GM12878 (cell line): ENCODE measurements at regions of chr3 and their contacts with region 1.

Region 1: DNA sequence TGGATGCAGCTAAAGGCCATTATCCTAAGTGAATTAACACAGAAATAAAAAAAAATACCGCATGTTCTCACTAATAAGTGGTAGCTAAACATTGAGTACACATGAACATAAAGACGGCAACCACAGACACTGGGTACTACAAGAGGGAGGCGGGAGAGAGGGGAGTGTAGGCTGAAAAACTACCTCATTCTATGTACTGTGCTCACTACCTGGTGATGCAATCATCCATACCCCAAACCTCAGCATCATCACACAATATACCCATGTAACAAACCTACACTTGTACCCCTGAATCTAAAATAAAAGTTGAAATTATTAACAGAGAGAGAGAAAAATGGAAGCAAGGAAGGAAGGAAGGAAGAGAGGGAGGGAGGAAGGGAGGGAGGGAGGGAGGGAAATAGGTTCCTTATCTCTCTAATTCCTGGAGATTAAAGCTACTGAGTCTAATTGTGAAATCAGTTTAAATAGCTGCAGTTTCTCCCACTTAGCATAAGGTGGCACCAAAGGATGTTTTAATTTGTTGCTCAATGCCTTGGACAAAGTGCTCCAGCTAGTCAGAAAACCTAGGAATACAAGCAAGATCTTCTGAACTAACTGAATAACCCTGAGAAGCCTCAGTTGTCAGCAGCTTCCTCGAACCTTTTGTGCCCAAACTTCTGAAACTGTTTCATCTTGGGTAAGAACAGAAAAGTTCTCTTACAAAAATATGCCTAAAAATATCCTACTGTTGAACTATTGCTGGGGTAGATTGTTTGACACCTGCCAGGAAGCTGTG is 79.4 kb upstream of the ATP11B start:
- DNase-seq: peak; percentile 49
- ATAC-seq: peak; percentile 48
- H3K4me3 ChIP-seq: no peak overlapping the region
- H3K27ac ChIP-seq: no peak overlapping the region; the same call in 1 of the 2 replicates
- H3K4me1 ChIP-seq: peaks cover 35% of the 10 kb centered on the region
- H3K27me3 ChIP-seq: no peaks in the 10 kb centered on the region
- CTCF ChIP-seq: peak; percentile 51 to 81 (median 64); a peak in 5 of 6 replicates
- EP300 ChIP-seq: no peak
- POLR2A ChIP-seq: no peak
- RAD21 ChIP-seq: peak; percentile 89

Region 2: DNA sequence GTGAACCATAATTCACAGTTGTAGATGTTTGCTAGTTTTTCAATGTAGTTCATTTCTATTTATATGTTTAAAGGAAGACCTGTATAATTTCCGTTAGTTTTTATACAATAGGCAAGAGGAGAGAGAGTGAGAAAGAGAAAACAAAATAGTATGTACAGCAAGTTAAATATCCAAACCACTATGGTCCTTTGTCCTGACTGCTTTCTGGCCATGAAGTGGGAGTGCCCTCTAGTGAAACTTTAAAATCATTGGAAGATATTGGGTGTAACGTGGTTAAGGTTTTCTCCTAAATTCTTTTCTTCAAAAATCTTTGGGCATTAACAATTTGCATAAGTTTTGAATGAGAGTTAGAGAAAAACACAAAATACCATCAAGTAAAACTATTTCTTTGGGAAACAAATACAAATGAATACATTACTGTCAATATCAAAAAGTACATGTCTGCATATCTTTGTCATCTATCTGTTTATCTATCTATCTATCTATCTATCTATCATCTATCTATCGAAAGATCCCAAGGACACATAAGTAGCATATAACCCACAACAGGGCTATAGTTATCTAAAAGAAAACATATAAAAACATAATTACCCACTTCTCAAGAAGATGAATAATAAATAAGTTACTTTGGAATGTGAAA is 455.3 kb before region 1 on chr3:
- CTCF ChIA-PET with region 1: no interaction called
- POLR2A ChIA-PET with region 1: no interaction called
- RAD21 ChIA-PET with region 1: no interaction called
- SMC1A ChIA-PET with region 1: no interaction called
- in situ Hi-C with region 1: no loop called
- intact Hi-C with region 1: no loop called
- DNase-seq: no peak
- ATAC-seq: peak; percentile 55; the same call in 2 of the 3 replicates
- H3K4me3 ChIP-seq: no peak overlapping the region
- H3K27ac ChIP-seq: no peak overlapping the region
- H3K4me1 ChIP-seq: no peaks in the 10 kb centered on the region
- H3K27me3 ChIP-seq: no peaks in the 10 kb centered on the region; a peak in 1 of 4 replicates
- CTCF ChIP-seq: peak; percentile 36 to 57 (median 38); a peak in 4 of 6 replicates
- EP300 ChIP-seq: no peak
- POLR2A ChIP-seq: no peak
- RAD21 ChIP-seq: peak; percentile 96

Region 3: DNA sequence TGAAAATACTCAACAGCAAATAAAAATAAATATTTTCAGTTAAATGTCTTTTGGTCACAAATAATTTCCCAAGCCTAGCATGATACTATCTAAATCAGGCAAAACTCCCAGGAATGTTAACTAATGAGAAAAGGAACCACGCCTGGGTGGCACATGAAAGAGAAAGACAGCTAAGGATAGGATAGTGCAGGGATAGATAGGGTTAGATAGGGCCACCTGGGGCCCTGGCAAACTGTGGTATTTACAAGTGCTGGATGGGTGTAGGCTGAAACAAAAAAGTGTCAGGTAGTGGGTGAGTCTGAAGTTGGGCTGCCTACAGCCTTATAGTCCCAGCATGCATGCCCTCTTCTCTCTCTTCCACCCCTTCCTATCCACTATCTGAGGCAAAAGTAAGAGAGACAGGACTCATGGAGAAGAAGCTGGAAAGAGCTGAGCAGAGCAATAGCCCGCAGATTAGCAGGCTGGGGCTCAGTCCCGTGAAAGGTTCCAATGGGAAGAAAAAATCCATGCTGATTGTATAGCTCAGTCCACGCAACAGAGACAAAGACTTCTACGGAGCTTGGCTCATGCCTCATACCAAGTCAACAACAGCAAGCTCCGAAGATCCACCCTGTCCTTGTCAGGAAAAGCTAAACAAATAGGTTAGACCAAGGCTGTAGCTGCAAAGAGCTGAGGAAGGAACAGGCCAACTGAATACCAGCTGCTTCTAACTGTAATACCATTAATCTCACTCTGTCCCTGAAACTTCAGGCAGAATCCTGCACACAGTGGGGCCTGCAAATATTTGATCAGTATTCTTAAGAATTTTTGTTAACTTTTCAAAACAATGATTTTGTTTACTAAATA is 262.8 kb before region 1 on chr3:
- CTCF ChIA-PET with region 1: no interaction called
- POLR2A ChIA-PET with region 1: no interaction called
- RAD21 ChIA-PET with region 1: no interaction called
- SMC1A ChIA-PET with region 1: no interaction called
- in situ Hi-C with region 1: no loop called
- intact Hi-C with region 1: no loop called
- DNase-seq: no peak
- ATAC-seq: no peak
- H3K4me3 ChIP-seq: no peak overlapping the region
- H3K27ac ChIP-seq: no peak overlapping the region
- H3K4me1 ChIP-seq: no peaks in the 10 kb centered on the region
- H3K27me3 ChIP-seq: no peaks in the 10 kb centered on the region; a peak in 2 of 4 replicates
- CTCF ChIP-seq: no peak
- EP300 ChIP-seq: no peak
- POLR2A ChIP-seq: no peak
- RAD21 ChIP-seq: no peak

Region 4: GRCh38 chr3:182575941-182576340 is 138.0 kb before region 1 on chr3:
- CTCF ChIA-PET with region 1: no interaction called
- POLR2A ChIA-PET with region 1: no interaction called
- RAD21 ChIA-PET with region 1: no interaction called
- SMC1A ChIA-PET with region 1: no interaction called
- in situ Hi-C with region 1: no loop called
- intact Hi-C with region 1: no loop called
- DNase-seq: no peak
- ATAC-seq: no peak
- H3K4me3 ChIP-seq: no peak overlapping the region
- H3K27ac ChIP-seq: no peak overlapping the region
- H3K4me1 ChIP-seq: no peaks in the 10 kb centered on the region
- H3K27me3 ChIP-seq: no peaks in the 10 kb centered on the region
- CTCF ChIP-seq: no peak
- EP300 ChIP-seq: no peak
- POLR2A ChIP-seq: no peak
- RAD21 ChIP-seq: no peak

Region 5: DNA sequence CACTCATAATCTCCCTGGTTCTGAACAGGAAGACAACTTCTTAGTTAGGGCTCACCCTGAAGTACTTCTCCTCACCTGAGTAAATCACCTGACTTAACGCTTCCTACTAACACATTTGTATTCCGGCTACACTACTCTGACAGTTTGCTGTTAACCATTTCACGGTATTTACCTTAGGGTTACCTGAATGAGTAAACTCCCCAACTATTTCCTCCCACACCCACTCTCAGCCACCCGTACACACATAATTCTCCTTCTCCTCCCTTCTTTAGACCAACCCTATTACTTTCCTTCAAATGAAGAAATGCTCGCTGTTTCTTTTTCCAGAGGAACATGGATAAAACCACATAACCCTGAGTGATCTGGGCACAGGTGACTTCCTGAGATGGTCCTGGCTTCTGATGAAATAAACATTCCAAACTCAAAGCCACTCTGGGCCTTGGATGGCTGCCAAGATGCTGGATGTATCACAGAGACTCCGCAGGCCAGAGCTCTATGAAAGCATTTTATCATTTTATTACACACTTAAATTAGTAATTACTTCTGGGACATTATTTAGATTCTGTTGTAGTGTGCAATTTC is 104.3 kb before region 1 on chr3:
- CTCF ChIA-PET with region 1: no interaction called
- POLR2A ChIA-PET with region 1: no interaction called
- RAD21 ChIA-PET with region 1: no interaction called
- SMC1A ChIA-PET with region 1: no interaction called
- in situ Hi-C with region 1: no loop called
- intact Hi-C with region 1: no loop called
- DNase-seq: no peak
- ATAC-seq: no peak
- H3K4me3 ChIP-seq: no peak overlapping the region
- H3K27ac ChIP-seq: no peak overlapping the region
- H3K4me1 ChIP-seq: no peaks in the 10 kb centered on the region
- H3K27me3 ChIP-seq: no peaks in the 10 kb centered on the region
- CTCF ChIP-seq: no peak
- EP300 ChIP-seq: no peak
- POLR2A ChIP-seq: no peak
- RAD21 ChIP-seq: no peak

Region 6: GRCh38 chr3:182746959-182747358 is 33.0 kb after region 1 on chr3:
- CTCF ChIA-PET with region 1: interaction called, 4 read pairs
- POLR2A ChIA-PET with region 1: no interaction called
- RAD21 ChIA-PET with region 1: interaction called, 4 read pairs
- SMC1A ChIA-PET with region 1: interaction called, 12 read pairs
- in situ Hi-C with region 1: no loop called
- intact Hi-C with region 1: no loop called
- DNase-seq: no peak
- ATAC-seq: no peak
- H3K4me3 ChIP-seq: no peak overlapping the region
- H3K27ac ChIP-seq: no peak overlapping the region
- H3K4me1 ChIP-seq: no peaks in the 10 kb centered on the region
- H3K27me3 ChIP-seq: no peaks in the 10 kb centered on the region
- CTCF ChIP-seq: no peak
- EP300 ChIP-seq: no peak
- POLR2A ChIP-seq: no peak
- RAD21 ChIP-seq: no peak

Region 7: GRCh38 chr3:182829761-182830405 is 116.0 kb after region 1 on chr3:
- CTCF ChIA-PET with region 1: interaction called, 195 read pairs
- POLR2A ChIA-PET with region 1: interaction called, 3 read pairs
- RAD21 ChIA-PET with region 1: interaction called, 136 read pairs
- SMC1A ChIA-PET with region 1: interaction called, 106 read pairs
- in situ Hi-C with region 1: loop called (anchors 5 kb)
- intact Hi-C with region 1: no loop called
- DNase-seq: no peak
- ATAC-seq: no peak
- H3K4me3 ChIP-seq: no peak overlapping the region
- H3K27ac ChIP-seq: no peak overlapping the region
- H3K4me1 ChIP-seq: peaks cover 2% of the 10 kb centered on the region; the same call in 1 of the 2 replicates
- H3K27me3 ChIP-seq: no peaks in the 10 kb centered on the region
- CTCF ChIP-seq: no peak
- EP300 ChIP-seq: no peak
- POLR2A ChIP-seq: no peak
- RAD21 ChIP-seq: no peak

Region 8: GRCh38 chr3:182861348-182861747 is 147.4 kb after region 1 on chr3:
- CTCF ChIA-PET with region 1: interaction called, 93 read pairs
- POLR2A ChIA-PET with region 1: no interaction called
- RAD21 ChIA-PET with region 1: interaction called, 10 read pairs
- SMC1A ChIA-PET with region 1: interaction called, 24 read pairs
- in situ Hi-C with region 1: no loop called
- intact Hi-C with region 1: no loop called
- DNase-seq: no peak
- ATAC-seq: no peak
- H3K4me3 ChIP-seq: no peak overlapping the region
- H3K27ac ChIP-seq: no peak overlapping the region
- H3K4me1 ChIP-seq: no peaks in the 10 kb centered on the region
- H3K27me3 ChIP-seq: no peaks in the 10 kb centered on the region
- CTCF ChIP-seq: no peak
- EP300 ChIP-seq: no peak
- POLR2A ChIP-seq: no peak
- RAD21 ChIP-seq: no peak

Region 9: GRCh38 chr3:182904164-182904563 is 190.2 kb after region 1 on chr3:
- CTCF ChIA-PET with region 1: interaction called, 41 read pairs
- POLR2A ChIA-PET with region 1: no interaction called
- RAD21 ChIA-PET with region 1: interaction called, 26 read pairs
- SMC1A ChIA-PET with region 1: interaction called, 14 read pairs
- in situ Hi-C with region 1: no loop called
- intact Hi-C with region 1: no loop called
- DNase-seq: no peak
- ATAC-seq: peak; percentile 23; the same call in 1 of the 3 replicates
- H3K4me3 ChIP-seq: no peak overlapping the region
- H3K27ac ChIP-seq: no peak overlapping the region
- H3K4me1 ChIP-seq: no peaks in the 10 kb centered on the region
- H3K27me3 ChIP-seq: no peaks in the 10 kb centered on the region
- CTCF ChIP-seq: peak in 1 of 3 experiments; percentile 11; a peak in 1 of 6 replicates
- EP300 ChIP-seq: no peak
- POLR2A ChIP-seq: no peak
- RAD21 ChIP-seq: no peak

Region 10: GRCh38 chr3:183116025-183116614 is 402.2 kb after region 1 on chr3:
- CTCF ChIA-PET with region 1: interaction called, 6 read pairs
- POLR2A ChIA-PET with region 1: no interaction called
- RAD21 ChIA-PET with region 1: interaction called, 14 read pairs
- SMC1A ChIA-PET with region 1: interaction called, 5 read pairs
- in situ Hi-C with region 1: no loop called
- intact Hi-C with region 1: loop called (anchors 5 kb)
- DNase-seq: no peak
- ATAC-seq: peak; percentile 96
- H3K4me3 ChIP-seq: peak overlapping the region; percentile 45
- H3K27ac ChIP-seq: no peak overlapping the region
- H3K4me1 ChIP-seq: peaks cover 3% of the 10 kb centered on the region; the same call in 1 of the 2 replicates
- H3K27me3 ChIP-seq: no peaks in the 10 kb centered on the region
- CTCF ChIP-seq: no peak
- EP300 ChIP-seq: no peak
- POLR2A ChIP-seq: peak; percentile 50; the same call in 1 of the 2 replicates
- RAD21 ChIP-seq: no peak

Region 11: GRCh38 chr3:183385698-183386613 is 672.0 kb after region 1 on chr3:
- CTCF ChIA-PET with region 1: interaction called, 66 read pairs
- POLR2A ChIA-PET with region 1: no interaction called
- RAD21 ChIA-PET with region 1: interaction called, 62 read pairs
- SMC1A ChIA-PET with region 1: interaction called, 24 read pairs
- in situ Hi-C with region 1: loop called (anchors 5 kb)
- intact Hi-C with region 1: loop called (anchors 2 kb)
- DNase-seq: no peak
- ATAC-seq: peak; percentile 85
- H3K4me3 ChIP-seq: no peak overlapping the region
- H3K27ac ChIP-seq: no peak overlapping the region
- H3K4me1 ChIP-seq: peaks cover 7% of the 10 kb centered on the region; the same call in 1 of the 2 replicates
- H3K27me3 ChIP-seq: no peaks in the 10 kb centered on the region
- CTCF ChIP-seq: peak; percentile 63 to 87 (median 81); a peak in 5 of 6 replicates
- EP300 ChIP-seq: no peak
- POLR2A ChIP-seq: no peak
- RAD21 ChIP-seq: peak; percentile 84